BJ (cell line): ENCODE measurements at regions of chr2 and their contacts with region 1.

Region 1: DNA sequence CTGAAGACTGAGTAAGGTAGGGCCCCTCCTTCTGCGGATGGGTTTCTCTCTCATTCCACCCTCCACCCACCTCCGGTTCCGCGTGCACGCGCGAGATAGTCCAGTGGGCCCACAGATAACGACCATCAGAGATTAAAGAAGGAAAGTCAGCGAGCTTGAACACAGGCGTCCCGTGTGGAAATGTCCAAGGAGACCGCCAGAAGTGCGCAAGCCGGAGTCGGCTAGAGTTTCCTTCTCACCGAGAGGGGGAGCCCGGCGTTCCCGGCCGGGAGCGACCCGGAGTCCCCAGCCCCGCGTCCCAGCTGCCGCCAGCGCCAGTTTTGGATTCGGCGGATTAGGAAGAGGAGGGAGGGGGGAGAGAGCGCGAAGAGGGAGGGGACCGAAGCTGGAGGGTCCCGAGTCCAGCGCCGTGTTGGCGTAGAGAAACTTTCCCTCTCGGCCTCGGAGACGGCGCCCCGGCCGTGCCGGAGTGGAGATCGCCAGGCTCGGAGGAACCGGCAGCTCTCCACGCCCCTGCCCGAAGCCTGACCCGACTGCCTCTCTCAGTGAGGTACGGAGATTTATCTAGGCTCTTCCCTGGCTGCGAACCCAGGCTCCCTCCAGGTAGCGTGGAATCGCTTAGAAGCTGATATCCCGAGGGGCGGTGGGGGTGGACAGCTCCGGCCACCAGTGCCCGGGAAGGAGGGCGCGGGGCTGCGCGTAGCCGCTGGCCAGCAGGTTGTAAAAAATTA is at the start of gene GULP1:
- DNase-seq: no peak
- H3K4me3 ChIP-seq: peak within 1 kb of the TSS; percentile 91
- H3K27me3 ChIP-seq: no peaks in the 10 kb centered on the region
- CTCF ChIP-seq: peak; percentile 86
- polyA plus RNA-seq, gene GULP1: 31.0 and 53.5 TPM in 2 replicates

Region 2: DNA sequence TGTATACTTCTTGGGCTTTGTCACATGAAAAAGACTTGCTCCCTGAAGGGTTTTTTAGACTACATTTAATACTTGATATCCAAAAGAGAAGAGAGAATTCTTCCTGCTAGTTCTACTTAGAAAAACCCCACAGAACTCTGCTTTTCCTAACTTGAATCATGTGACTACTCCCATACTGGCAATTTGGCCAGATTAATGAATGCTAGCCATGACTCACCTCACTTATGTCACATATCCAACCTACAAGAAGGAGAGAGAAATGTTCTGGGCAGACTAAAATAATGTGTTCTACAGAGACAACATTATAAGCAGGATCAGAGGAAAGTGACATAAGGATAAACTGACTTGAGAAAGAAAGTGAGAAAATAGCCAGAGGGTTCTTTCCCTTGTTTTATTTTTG is 249.4 kb before region 1 on chr2:
- CTCF ChIA-PET with region 1: no interaction called
- POLR2A ChIA-PET with region 1: no interaction called
- DNase-seq: no peak
- H3K4me3 ChIP-seq: no peak overlapping the region
- H3K27me3 ChIP-seq: no peaks in the 10 kb centered on the region
- CTCF ChIP-seq: no peak

Region 3: DNA sequence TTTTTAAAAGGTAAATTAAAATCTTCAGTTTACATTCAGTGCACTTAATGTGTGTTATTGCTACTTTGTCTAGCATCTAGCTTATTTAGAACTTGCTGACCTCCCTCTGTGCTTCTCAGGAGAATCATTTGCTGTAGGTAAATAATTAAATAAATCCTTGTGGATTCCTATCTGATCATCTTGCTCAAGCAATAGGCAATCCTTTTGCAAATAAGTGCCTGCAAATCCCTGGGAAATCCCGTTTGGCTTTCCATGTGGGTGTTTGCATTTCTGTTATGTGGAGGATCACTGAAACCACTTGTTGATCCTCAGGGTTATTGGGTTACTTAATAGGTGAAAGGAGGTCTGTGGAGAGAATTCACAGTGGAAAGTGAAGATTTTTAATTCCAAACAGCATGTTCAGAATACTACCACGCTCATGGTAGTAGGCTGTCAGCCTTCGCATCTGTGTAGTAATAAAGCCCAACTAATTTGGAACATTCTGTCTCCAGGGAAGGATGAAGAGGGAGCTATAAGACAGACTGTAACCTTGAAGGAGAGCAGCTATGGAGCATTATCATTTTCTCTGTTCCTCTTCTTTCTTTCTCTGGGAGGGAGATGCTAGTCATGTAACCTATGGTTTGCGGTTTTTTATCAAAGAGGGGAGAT is 72.3 kb after region 1 on chr2:
- CTCF ChIA-PET with region 1: interaction called, 16 read pairs
- POLR2A ChIA-PET with region 1: no interaction called
- DNase-seq: no peak
- H3K4me3 ChIP-seq: no peak overlapping the region
- H3K27me3 ChIP-seq: no peaks in the 10 kb centered on the region
- CTCF ChIP-seq: no peak